GM12878 (cell line): ENCODE measurements at regions of chr16 and their contacts with region 1.

Region 1: DNA sequence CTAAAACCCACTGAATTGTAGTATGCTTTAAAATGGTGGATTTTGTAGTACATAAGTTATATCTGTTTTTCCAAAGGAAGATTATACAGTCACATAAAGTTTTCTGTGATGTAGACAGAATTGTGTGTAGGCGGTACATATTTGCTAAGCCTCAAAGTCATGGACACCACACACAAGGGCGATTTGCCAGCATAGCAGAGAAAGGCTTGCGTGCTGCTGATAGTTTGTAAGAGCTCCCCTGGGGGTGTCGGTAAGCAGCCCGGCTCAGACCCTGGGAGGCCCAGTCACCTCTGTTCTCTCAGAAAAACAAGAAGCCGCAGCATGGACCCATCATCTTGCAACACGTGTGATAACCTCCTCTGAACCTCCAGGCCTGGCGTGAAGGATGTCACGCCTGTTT is 38.3 kb upstream of the AKTIP start:
- DNase-seq: no peak
- ATAC-seq: no peak
- H3K4me3 ChIP-seq: no peak overlapping the region
- H3K27ac ChIP-seq: no peak overlapping the region
- H3K4me1 ChIP-seq: no peaks in the 10 kb centered on the region
- H3K27me3 ChIP-seq: no peaks in the 10 kb centered on the region
- CTCF ChIP-seq: no peak
- EP300 ChIP-seq: no peak
- POLR2A ChIP-seq: no peak
- RAD21 ChIP-seq: no peak

Region 2: DNA sequence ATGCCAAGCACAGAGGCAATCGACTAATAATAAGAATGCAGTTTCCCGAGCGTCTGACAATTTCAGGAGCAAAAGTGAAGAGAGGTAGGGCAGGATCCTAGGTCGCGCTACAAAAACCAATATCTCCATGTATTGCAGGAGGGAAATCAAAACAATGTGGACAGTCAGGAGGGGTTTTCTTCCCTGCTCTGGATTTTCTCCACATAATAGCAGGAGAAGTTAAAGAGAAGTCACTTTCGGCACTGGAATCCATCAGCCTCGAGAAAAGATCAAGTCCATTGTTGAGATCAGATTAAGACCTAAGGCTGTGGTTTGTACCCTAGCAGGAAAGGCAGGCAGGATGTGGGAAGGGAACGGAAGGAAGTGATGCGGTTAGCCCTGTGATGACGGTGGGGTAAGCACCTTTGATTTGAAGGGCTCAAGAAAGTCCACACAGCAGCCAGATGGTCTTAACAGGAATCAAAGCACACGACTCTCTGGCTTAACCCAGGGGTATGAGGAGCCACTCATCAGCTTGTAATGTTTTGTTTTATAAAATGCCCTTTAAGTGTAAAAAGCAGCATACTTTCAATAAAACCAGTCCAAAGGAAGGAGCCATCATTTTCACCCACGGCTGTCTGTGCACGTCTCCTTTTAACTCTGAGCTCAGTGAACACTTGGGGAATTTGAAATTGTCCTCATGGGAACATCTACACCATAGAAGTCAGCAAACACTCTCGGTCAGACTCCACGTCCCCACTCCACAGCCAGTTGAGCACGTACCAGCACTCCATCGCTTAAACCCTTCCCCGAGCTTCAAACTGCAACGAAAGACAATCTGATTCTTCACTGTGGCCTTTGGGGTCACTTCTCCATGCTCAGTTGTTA is 22.5 kb before region 1 on chr16:
- CTCF ChIA-PET with region 1: interaction called, 5 read pairs
- POLR2A ChIA-PET with region 1: interaction called, 3 read pairs
- RAD21 ChIA-PET with region 1: interaction called, 6 read pairs
- SMC1A ChIA-PET with region 1: interaction called, 43 read pairs
- in situ Hi-C with region 1: no loop called
- intact Hi-C with region 1: no loop called
- DNase-seq: peak; percentile 97
- ATAC-seq: peak; percentile 94
- H3K4me3 ChIP-seq: peak overlapping the region; percentile 44; the same call in 1 of the 2 replicates
- H3K27ac ChIP-seq: peak overlapping the region; percentile 94
- H3K4me1 ChIP-seq: peaks cover 21% of the 10 kb centered on the region
- H3K27me3 ChIP-seq: no peaks in the 10 kb centered on the region
- CTCF ChIP-seq: no peak
- EP300 ChIP-seq: peak; percentile 82 to 85
- POLR2A ChIP-seq: peak; percentile 65
- RAD21 ChIP-seq: no peak